Panc1 (cell line): ENCODE measurements at regions of chr1 and their contacts with region 1.

Region 1: GRCh38 chr1:109090196-109091077 is at the start of gene TMEM167B:
- DNase-seq: peak; percentile 85
- ATAC-seq: peak; percentile 93
- H3K4me3 ChIP-seq: peak within 1 kb of the TSS; percentile 61 to 90
- H3K27ac ChIP-seq: peak within 1 kb of the TSS; percentile 95
- H3K4me1 ChIP-seq: peaks cover 19% of the 10 kb centered on the region
- H3K27me3 ChIP-seq: no peaks in the 10 kb centered on the region
- CTCF ChIP-seq: no peak
- total RNA-seq, gene TMEM167B: 18.1 TPM

Region 2: GRCh38 chr1:109112652-109113285 is 22.3 kb after region 1 on chr1:
- CTCF ChIA-PET with region 1: no interaction called
- POLR2A ChIA-PET with region 1: interaction called, 3 read pairs
- in situ Hi-C with region 1: no loop called
- intact Hi-C with region 1: loop called (anchors 1 kb)
- DNase-seq: no peak
- ATAC-seq: peak; percentile 94
- H3K4me3 ChIP-seq: peak overlapping the region; percentile 3 to 30; a peak in 3 of 4 replicates
- H3K27ac ChIP-seq: no peak overlapping the region
- H3K4me1 ChIP-seq: no peaks in the 10 kb centered on the region
- H3K27me3 ChIP-seq: no peaks in the 10 kb centered on the region
- CTCF ChIP-seq: peak; percentile 91

Region 3: GRCh38 chr1:109201123-109201703 is 110.8 kb after region 1 on chr1:
- CTCF ChIA-PET with region 1: no interaction called
- POLR2A ChIA-PET with region 1: interaction called, 16 read pairs
- in situ Hi-C with region 1: no loop called
- intact Hi-C with region 1: loop called (anchors 5 kb)
- DNase-seq: no peak
- ATAC-seq: no peak
- H3K4me3 ChIP-seq: no peak overlapping the region
- H3K27ac ChIP-seq: no peak overlapping the region
- H3K4me1 ChIP-seq: no peaks in the 10 kb centered on the region; the same call in 1 of the 2 replicates
- H3K27me3 ChIP-seq: no peaks in the 10 kb centered on the region
- CTCF ChIP-seq: peak; percentile 61

Region 4: GRCh38 chr1:109370712-109371455 is 280.4 kb after region 1 on chr1:
- CTCF ChIA-PET with region 1: no interaction called
- POLR2A ChIA-PET with region 1: no interaction called
- in situ Hi-C with region 1: no loop called
- intact Hi-C with region 1: no loop called
- DNase-seq: no peak
- ATAC-seq: no peak
- H3K4me3 ChIP-seq: no peak overlapping the region
- H3K27ac ChIP-seq: no peak overlapping the region
- H3K4me1 ChIP-seq: no peaks in the 10 kb centered on the region
- H3K27me3 ChIP-seq: no peaks in the 10 kb centered on the region
- CTCF ChIP-seq: no peak